Left ventricle myocardium superior (tissue), 1 donor: ENCODE measurements at regions of chr2 and their contacts with region 1.

Region 1: DNA sequence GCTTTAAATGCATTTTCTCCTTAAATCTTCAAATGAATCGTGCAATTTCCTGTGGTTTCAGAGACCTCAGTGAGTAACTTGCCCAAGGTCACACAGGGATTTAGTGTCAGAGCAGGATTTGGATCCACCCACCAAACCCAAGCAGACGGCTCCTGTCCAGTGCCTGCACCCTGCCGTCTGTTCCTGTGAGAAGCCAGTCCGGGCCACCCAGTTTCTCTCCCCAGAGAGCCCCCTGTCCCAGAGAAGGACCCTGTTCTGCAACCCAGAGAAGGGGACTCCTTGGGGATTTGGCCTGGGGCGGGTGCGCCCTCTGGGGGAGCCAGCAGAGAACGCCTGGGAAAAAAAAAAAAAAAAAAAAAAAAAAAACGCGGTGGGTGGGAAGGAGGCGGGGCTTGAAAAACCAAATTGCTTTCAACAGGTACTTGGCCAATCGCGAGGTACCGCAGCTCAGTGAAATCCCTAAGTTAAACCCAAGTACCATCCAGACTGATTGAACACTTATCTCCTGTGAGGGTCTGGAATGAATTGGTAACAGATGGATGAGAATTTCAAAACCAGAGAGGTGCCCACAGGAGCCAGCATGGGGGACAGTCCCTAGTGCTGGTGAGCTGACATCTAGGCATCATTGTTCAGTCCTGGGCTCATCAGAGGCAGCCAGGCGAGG is 30.9 kb upstream of the REEP1 start:
- DNase-seq: peak; percentile 62
- ATAC-seq: peak; percentile 52

Region 2: DNA sequence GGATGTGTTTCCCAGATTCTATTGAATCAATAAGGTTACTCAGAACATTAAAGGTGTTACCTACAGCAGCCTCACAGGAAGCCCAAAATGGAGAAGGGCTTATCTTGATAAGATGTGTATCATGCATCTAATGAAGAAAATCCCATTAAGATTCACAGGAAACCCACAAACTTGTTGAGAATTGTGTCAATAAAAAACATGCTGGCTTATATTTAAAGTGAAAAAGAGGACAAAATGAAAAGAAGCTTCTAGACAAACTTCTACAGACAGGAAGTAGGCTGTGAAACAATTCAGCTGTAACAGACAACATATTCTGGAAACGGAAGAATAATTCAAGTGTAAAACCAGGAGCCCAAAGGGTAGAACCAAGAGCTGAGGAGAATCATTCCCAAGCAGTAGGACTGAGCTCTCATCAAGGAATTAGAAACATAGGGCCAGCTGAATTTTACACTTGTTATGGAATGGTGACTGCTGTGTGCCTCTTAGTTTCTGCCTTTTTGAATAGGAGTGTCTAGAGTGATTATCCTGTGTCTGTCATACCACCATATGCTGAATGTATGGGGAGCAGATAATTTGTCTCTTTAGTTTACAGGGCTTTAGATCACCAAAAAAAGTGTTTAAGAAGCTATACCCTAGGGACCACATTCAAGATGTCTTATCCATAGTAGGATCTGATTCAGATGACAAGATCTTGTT is 182.6 kb before region 1 on chr2:
- intact Hi-C with region 1: no loop called
- DNase-seq: no peak
- ATAC-seq: peak; percentile 9

Region 3: DNA sequence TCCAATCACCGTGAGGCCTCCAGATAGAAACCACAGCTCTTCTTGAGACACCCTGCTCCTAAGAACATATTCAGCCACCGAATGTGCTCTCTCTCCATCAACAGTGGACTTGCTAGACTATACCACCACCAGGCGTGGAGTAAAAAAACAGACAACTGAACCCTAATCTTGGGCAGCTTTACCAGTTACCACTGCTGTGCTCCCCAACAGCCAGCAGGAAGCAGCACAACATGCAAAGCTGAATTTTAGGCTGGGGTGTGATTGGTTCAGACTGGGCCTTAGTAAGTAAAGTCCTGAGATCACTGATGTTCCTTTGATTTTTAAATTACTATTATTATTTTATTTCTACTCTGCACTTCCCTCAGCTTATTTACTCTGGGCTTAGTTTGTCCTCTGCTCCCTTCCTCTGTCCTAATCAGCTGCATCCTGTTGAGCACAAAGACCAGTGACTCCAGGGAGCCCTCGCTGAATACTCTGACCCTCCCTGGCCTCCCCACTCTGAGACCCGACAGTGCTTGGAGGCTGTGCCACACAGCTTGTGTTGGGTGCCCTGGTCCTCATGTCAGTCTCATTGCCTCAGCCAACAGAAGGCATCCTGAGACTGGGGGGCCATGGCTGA is 147.1 kb before region 1 on chr2:
- intact Hi-C with region 1: loop called (anchors 5 kb)
- DNase-seq: no peak
- ATAC-seq: no peak

Region 4: DNA sequence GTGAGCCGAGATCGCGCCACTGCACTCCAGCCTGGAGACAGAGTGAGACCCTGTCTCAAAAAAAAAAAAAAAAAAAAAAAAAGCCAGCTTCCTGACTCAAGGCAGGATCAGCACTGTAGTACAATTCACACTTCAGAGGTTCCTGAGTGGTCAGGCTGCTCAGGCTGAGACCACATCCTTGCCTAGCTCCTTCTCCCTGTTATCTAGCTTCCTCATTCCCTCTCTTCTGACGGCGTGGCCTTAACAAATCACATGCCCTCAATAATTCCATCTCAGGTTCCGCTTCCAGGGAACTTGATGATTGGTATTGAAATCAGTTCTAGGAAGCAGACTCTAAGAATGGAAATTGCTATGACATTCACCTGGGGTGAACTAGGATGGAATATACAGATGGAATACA is 43.1 kb after region 1 on chr2:
- intact Hi-C with region 1: no loop called
- DNase-seq: no peak
- ATAC-seq: no peak